Heart left ventricle (tissue), 16 donors: ENCODE measurements at regions of chrX and their contacts with region 1.

Region 1: DNA sequence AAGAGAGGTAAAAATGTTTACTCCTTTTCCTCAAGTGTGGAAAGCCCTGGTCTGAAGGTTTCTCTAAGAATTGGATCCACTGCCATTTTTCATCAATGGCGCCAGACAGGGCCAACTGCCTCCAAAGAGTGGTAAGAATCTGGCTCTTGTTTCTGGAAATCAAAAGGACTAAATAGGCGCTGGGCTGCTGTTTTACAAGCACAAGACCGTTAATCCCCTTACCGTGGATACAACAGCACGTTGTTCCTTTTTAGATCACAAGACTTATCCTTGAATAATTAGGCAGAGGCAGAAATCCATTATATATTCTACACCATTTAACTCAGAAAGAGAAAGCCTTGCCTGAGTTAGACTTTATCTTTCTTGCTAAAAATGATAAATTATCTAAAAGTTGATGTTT is 10.6 kb downstream of the CLTRN start:
- DNase-seq: no peak
- ATAC-seq: no peak
- H3K4me3 ChIP-seq: no peak overlapping the region
- H3K27ac ChIP-seq: no peak overlapping the region
- H3K4me1 ChIP-seq: no peaks in the 10 kb centered on the region
- H3K27me3 ChIP-seq: peaks cover 0 to 67% (median 0%) of the 10 kb centered on the region in 9 donors
- CTCF ChIP-seq: no peak
- POLR2A ChIP-seq: no peak

Region 2: GRCh38 chrX:15277604-15278003 is 376.4 kb before region 1 on chrX:
- intact Hi-C with region 1: no loop called
- DNase-seq: no peak
- ATAC-seq: peak in 3 of 4 donors; percentile 48 to 77 (median 74)
- H3K4me3 ChIP-seq: no peak overlapping the region
- H3K27ac ChIP-seq: peak overlapping the region in 4 of 12 donors; percentile 22 to 56 (median 40)
- H3K4me1 ChIP-seq: peaks cover 0 to 5% (median 0%) of the 10 kb centered on the region in 12 donors
- H3K27me3 ChIP-seq: peaks cover 0 to 14% (median 0%) of the 10 kb centered on the region in 9 donors
- CTCF ChIP-seq: no peak
- POLR2A ChIP-seq: no peak

Region 3: GRCh38 chrX:15416133-15416993 is 237.6 kb before region 1 on chrX:
- intact Hi-C with region 1: no loop called
- DNase-seq: no peak
- ATAC-seq: no peak
- H3K4me3 ChIP-seq: no peak overlapping the region
- H3K27ac ChIP-seq: no peak overlapping the region
- H3K4me1 ChIP-seq: no peaks in the 10 kb centered on the region
- H3K27me3 ChIP-seq: peaks cover 0 to 23% (median 0%) of the 10 kb centered on the region in 9 donors
- CTCF ChIP-seq: no peak
- POLR2A ChIP-seq: no peak

Region 4: DNA sequence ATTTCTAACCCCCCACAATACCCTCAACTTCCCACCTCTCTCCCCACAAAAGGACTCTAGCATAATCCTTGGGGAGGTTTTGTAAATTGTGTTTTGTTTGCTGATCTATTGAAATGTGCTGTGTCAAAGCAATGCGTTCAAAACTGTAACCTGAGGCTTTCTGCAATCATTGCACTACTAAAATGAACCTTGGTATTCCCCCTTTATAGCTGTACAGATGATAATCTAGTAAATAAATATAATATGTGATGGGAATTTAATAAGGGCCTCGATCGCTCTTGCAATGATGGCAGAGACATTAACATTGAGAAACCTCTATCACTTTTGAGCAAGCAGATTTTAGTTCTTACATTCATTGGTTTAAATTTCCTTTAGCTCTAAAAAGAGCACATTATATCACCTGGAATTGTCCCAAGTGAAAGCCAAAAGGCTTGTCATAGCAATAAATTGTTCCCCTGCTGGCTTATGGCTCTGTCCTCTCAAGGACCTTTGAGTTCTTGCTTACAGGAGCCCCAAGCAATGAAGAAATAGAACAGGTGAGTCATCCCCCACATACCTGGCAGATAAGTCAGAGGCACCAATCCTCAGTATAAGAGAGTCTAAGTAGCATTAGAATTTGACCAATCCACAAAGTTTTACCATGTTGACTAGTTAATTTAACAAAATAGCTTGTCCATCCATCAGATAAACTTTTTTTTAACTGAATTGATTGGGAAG is 34.7 kb before region 1 on chrX:
- intact Hi-C with region 1: loop called in 1 of 10 experiments (anchors 2 kb)
- DNase-seq: no peak
- ATAC-seq: no peak
- H3K4me3 ChIP-seq: no peak overlapping the region
- H3K27ac ChIP-seq: no peak overlapping the region
- H3K4me1 ChIP-seq: no peaks in the 10 kb centered on the region
- H3K27me3 ChIP-seq: peaks cover 0 to 63% (median 0%) of the 10 kb centered on the region in 9 donors
- CTCF ChIP-seq: no peak
- POLR2A ChIP-seq: no peak